ENCODE measurements at regions of chr1 and their contacts with region 1.

Region 1: GRCh38 chr1:78054559-78054958 is 8.8 kb downstream of the GIPC2 start:
- DNase-seq: no peak
- ATAC-seq: no peak

Region 2: DNA sequence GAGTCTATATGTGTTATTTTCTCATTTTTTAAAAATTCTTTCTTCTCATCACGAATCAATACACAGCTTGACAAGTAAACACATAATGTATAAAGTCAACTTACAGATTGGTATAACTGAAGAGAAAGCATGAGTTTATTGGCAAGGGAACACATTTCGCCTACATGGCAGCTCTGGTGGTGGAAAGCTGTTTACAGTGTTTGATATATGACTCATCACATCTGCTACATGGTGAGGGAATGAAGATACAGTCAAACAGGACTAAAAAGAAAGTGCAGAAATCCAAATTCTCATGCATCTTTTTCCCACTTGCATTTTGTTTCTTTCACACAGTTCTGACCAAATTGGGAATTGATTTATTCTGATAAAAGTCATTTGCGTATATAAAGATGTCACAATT is 1074.2 kb after region 1 on chr1:
- intact Hi-C with region 1: loop called (anchors 10 kb)
- DNase-seq: no peak
- ATAC-seq: no peak

Measured in sciatic nerve (tissue), 2 donors.